ENCODE measurements at regions of chr20 and their contacts with region 1.

Region 1: DNA sequence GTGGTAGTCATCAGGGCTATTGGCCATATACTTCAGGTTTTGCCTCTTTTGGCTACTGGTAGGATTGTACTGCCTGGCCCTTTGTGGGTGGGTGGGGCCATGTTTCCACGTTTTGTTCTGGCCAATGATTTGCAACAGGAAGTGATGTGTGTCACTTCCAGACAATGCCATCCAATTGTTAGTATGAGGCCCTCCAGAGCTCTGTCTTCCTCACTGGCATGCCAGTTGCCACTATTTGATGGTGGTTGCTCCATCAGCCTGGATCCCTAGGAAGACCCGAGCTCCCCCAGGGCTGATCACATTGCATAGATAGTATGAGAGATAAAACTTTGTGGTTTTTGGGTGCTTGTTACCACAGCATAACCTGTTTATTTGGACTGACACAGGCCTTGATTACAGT is 7.7 kb upstream of the LRRN4 start:
- DNase-seq: no peak
- ATAC-seq: no peak
- H3K4me3 ChIP-seq: no peak overlapping the region
- H3K27ac ChIP-seq: no peak overlapping the region
- H3K4me1 ChIP-seq: no peaks in the 10 kb centered on the region
- H3K27me3 ChIP-seq: no peaks in the 10 kb centered on the region
- CTCF ChIP-seq: no peak
- POLR2A ChIP-seq: no peak

Region 2: DNA sequence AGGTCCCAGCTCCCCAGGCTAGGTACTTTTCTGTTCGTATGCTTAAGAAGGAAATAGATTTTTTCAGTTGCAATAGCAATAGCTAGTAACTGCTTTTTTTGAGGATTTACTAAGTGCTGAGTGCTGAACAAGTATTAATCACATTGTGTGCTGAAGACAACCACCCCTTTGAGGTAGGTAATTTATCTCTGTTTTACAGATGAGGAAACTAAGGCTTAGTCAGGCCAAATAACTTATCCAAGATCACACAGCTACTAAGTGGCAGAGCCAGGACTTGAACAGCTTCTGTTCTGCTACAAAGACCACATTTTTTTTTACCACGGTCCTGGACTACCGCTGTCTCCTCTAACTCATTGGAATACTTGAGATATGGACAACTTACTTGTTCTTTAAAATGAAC is 47.5 kb before region 1 on chr20:
- intact Hi-C with region 1: loop called in 1 of 2 experiments (anchors 10 kb)
- DNase-seq: no peak
- ATAC-seq: no peak
- H3K4me3 ChIP-seq: no peak overlapping the region
- H3K27ac ChIP-seq: no peak overlapping the region
- H3K4me1 ChIP-seq: peaks cover 0 to 14% (median 0%) of the 10 kb centered on the region in 4 donors
- H3K27me3 ChIP-seq: no peaks in the 10 kb centered on the region
- CTCF ChIP-seq: no peak
- POLR2A ChIP-seq: no peak

Measured in right lobe of liver (tissue), 6 donors.